ENCODE measurements at regions of chr6 and their contacts with region 1.

Region 1: DNA sequence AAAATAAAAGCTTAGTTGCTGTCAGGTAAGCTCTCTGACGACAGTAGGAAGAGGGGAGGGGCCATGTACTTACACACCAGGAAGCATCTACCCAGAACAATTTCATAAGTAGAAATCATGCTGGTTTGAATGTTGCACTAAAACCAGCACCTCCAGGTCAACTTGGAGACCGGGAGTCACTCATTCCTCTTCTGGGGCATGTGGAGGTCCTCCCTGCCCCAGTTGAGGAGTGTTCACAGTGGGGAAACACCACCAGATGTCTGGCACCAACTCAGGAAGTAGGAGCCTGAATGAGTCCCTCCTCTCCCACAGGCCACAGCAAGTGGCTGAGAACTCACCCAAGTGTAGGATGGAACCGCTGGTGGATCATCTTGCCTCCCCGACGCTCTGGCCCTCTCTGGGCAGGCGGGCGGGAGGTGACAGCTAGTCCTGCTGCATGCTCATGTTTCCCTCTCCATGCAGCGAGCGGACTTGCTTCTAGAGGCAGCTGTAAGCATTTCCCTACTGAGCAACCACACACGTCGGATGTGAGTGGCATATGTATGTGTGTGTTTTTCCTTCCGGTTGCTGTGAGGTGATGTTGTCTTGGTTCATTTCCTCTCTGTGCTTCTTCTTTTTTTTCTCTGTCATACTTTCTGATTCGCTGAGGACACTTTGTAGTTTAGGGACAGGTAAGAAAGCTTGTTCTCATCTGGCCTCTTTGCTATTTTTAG is 149.5 kb upstream of the NEDD9 start:
- DNase-seq: peak; percentile 92
- ATAC-seq: peak; percentile 77
- H3K4me3 ChIP-seq: peak overlapping the region; percentile 72
- H3K27ac ChIP-seq: peak overlapping the region; percentile 90
- H3K4me1 ChIP-seq: peaks cover 24% of the 10 kb centered on the region
- H3K27me3 ChIP-seq: no peaks in the 10 kb centered on the region
- CTCF ChIP-seq: no peak
- EP300 ChIP-seq: no peak; a peak in 1 of 4 replicates
- POLR2A ChIP-seq: peak; percentile 92
- RAD21 ChIP-seq: 0 out of 2 replicates have a peak, but pooled peaks have one; percentile 5

Region 2: GRCh38 chr6:10939840-10940239 is 442.1 kb before region 1 on chr6:
- CTCF ChIA-PET with region 1: no interaction called
- POLR2A ChIA-PET with region 1: no interaction called
- RAD21 ChIA-PET with region 1: no interaction called
- SMC1A ChIA-PET with region 1: no interaction called
- in situ Hi-C with region 1: no loop called
- intact Hi-C with region 1: no loop called
- DNase-seq: no peak
- ATAC-seq: no peak
- H3K4me3 ChIP-seq: no peak overlapping the region
- H3K27ac ChIP-seq: no peak overlapping the region
- H3K4me1 ChIP-seq: no peaks in the 10 kb centered on the region
- H3K27me3 ChIP-seq: peaks cover 1 to 3% of the 10 kb centered on the region in 2 experiments; a peak in 1 of 4 replicates
- CTCF ChIP-seq: no peak
- EP300 ChIP-seq: no peak
- POLR2A ChIP-seq: no peak
- RAD21 ChIP-seq: no peak

Region 3: GRCh38 chr6:11172501-11173332 is 209.2 kb before region 1 on chr6:
- CTCF ChIA-PET with region 1: interaction called, 5 read pairs
- POLR2A ChIA-PET with region 1: no interaction called
- RAD21 ChIA-PET with region 1: interaction called, 12 read pairs
- SMC1A ChIA-PET with region 1: interaction called, 14 read pairs
- in situ Hi-C with region 1: no loop called
- intact Hi-C with region 1: loop called (anchors 2 kb)
- DNase-seq: no peak
- ATAC-seq: peak; percentile 89
- H3K4me3 ChIP-seq: no peak overlapping the region
- H3K27ac ChIP-seq: no peak overlapping the region
- H3K4me1 ChIP-seq: no peaks in the 10 kb centered on the region
- H3K27me3 ChIP-seq: no peaks in the 10 kb centered on the region
- CTCF ChIP-seq: peak; percentile 81 to 88 (median 81)
- EP300 ChIP-seq: no peak
- POLR2A ChIP-seq: no peak
- RAD21 ChIP-seq: peak; percentile 83

Region 4: GRCh38 chr6:11263291-11263775 is 118.6 kb before region 1 on chr6:
- CTCF ChIA-PET with region 1: interaction called, 3 read pairs
- POLR2A ChIA-PET with region 1: interaction called, 6 read pairs
- RAD21 ChIA-PET with region 1: interaction called, 4 read pairs
- SMC1A ChIA-PET with region 1: interaction called, 11 read pairs
- in situ Hi-C with region 1: no loop called
- intact Hi-C with region 1: no loop called
- DNase-seq: no peak
- ATAC-seq: no peak
- H3K4me3 ChIP-seq: no peak overlapping the region
- H3K27ac ChIP-seq: no peak overlapping the region
- H3K4me1 ChIP-seq: peaks cover 10% of the 10 kb centered on the region
- H3K27me3 ChIP-seq: no peaks in the 10 kb centered on the region
- CTCF ChIP-seq: no peak
- EP300 ChIP-seq: no peak
- POLR2A ChIP-seq: no peak
- RAD21 ChIP-seq: no peak

Region 5: GRCh38 chr6:11330413-11330760 is 51.6 kb before region 1 on chr6:
- CTCF ChIA-PET with region 1: interaction called, 3 read pairs
- POLR2A ChIA-PET with region 1: interaction called, 8 read pairs
- RAD21 ChIA-PET with region 1: interaction called, 118 read pairs
- SMC1A ChIA-PET with region 1: interaction called, 109 read pairs
- in situ Hi-C with region 1: no loop called
- intact Hi-C with region 1: loop called (anchors 2 kb)
- DNase-seq: no peak
- ATAC-seq: peak; percentile 35; the same call in 2 of the 3 replicates
- H3K4me3 ChIP-seq: no peak overlapping the region
- H3K27ac ChIP-seq: peak overlapping the region; percentile 58
- H3K4me1 ChIP-seq: peaks cover 35% of the 10 kb centered on the region
- H3K27me3 ChIP-seq: no peaks in the 10 kb centered on the region
- CTCF ChIP-seq: no peak
- EP300 ChIP-seq: no peak
- POLR2A ChIP-seq: no peak
- RAD21 ChIP-seq: no peak

Region 6: DNA sequence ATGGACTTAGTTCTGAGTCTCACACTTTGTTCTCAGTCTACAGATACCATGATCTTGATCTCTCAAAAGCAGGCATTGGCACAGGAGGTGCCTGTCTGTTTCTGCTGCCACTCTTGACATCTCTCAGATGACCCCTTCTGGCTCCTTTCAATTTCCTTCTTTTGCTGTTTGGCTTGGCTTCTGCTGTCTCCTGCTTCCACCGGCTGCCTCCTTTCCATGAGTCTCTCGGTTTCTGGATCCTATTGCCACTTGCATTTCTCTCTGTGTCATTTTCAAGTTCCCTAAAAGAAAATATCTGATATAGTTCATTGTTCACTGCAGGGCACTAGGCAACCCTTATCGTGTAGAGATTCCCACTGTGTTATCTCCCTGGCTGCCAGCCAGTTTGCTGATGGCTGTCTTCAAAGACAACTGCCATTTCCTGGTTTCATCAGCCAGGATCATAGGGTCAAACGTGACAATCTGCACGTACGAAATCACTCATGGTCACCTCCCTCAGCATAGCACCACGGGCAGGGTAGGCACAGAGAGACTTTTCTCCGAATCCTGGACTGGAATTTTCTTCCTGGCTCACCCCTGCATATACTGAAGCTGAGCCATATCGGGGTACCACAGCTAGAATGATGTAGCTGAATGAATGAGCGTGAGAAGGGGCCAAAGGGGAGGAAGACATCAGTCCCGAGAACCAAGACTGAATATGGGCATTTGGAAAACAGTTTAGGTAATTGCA is 11.0 kb after region 1 on chr6:
- CTCF ChIA-PET with region 1: interaction called, 8 read pairs
- POLR2A ChIA-PET with region 1: interaction called, 23 read pairs
- RAD21 ChIA-PET with region 1: interaction called, 30 read pairs
- SMC1A ChIA-PET with region 1: interaction called, 177 read pairs
- in situ Hi-C with region 1: no loop called
- intact Hi-C with region 1: no loop called
- DNase-seq: no peak
- ATAC-seq: no peak
- H3K4me3 ChIP-seq: no peak overlapping the region
- H3K27ac ChIP-seq: no peak overlapping the region
- H3K4me1 ChIP-seq: peaks cover 4% of the 10 kb centered on the region
- H3K27me3 ChIP-seq: no peaks in the 10 kb centered on the region
- CTCF ChIP-seq: no peak
- EP300 ChIP-seq: no peak
- POLR2A ChIP-seq: no peak
- RAD21 ChIP-seq: no peak

Region 7: DNA sequence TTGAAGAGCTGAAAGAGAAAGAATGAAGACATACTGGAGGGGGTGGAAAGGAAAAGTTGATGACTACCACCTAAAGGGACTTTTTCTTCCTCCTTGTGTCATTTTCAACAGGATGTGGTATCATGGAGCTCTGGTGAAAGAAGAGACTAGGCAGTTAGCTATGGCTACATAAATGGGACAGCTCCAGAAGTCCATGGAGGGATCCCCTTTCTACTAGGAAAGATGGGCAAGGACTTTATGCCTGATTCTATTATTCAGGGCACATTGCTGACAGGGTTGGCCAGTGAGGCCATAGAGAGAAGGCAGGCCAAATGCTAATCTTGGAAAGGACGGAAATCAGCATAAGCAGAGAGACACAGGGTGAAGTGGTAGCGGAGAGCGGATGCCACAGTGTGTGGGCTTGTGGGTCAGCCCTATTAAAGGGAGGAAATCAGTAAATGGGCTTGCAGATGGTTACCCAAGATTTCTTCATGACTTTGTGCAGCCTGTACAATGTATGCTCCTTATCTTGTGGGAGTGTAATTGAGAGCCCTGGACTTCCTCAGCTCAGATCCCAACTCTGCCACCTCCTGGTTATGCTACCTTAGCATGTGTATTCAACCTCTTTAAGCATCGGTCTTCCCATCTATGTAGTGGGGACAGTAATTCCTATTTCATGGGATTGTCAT is 78.2 kb after region 1 on chr6:
- CTCF ChIA-PET with region 1: interaction called, 78 read pairs
- POLR2A ChIA-PET with region 1: interaction called, 91 read pairs
- RAD21 ChIA-PET with region 1: interaction called, 384 read pairs
- SMC1A ChIA-PET with region 1: interaction called, 249 read pairs
- in situ Hi-C with region 1: no loop called
- intact Hi-C with region 1: loop called (anchors 1 kb)
- DNase-seq: peak; percentile 75
- ATAC-seq: peak; percentile 65
- H3K4me3 ChIP-seq: peak overlapping the region; percentile 28; the same call in 1 of the 2 replicates
- H3K27ac ChIP-seq: peak overlapping the region; percentile 96
- H3K4me1 ChIP-seq: peaks cover 40% of the 10 kb centered on the region
- H3K27me3 ChIP-seq: no peaks in the 10 kb centered on the region
- CTCF ChIP-seq: peak in 2 of 3 experiments; percentile 17 to 21; a peak in 3 of 6 replicates
- EP300 ChIP-seq: 0 out of 4 replicates have a peak, but pooled peaks of 1 of the 2 experiments have one; percentile 7
- POLR2A ChIP-seq: 0 out of 2 replicates have a peak, but pooled peaks have one; percentile 37
- RAD21 ChIP-seq: no peak; the same call in 1 of the 2 replicates

Measured in GM12878 (cell line).